ENCODE measurements at regions of chr15 and their contacts with region 1.

Region 1: GRCh38 chr15:88657326-88658069 is 18.7 kb downstream of the ISG20 start:
- DNase-seq: peak; percentile 81
- H3K4me3 ChIP-seq: no peak overlapping the region
- H3K27ac ChIP-seq: no peak overlapping the region
- H3K4me1 ChIP-seq: peaks cover 31% of the 10 kb centered on the region
- H3K27me3 ChIP-seq: no peaks in the 10 kb centered on the region

Region 2: GRCh38 chr15:88727439-88727838 is 69.9 kb after region 1 on chr15:
- in situ Hi-C with region 1: no loop called
- DNase-seq: no peak
- H3K4me3 ChIP-seq: no peak overlapping the region
- H3K27ac ChIP-seq: no peak overlapping the region
- H3K4me1 ChIP-seq: no peaks in the 10 kb centered on the region
- H3K27me3 ChIP-seq: peaks cover 9% of the 10 kb centered on the region

Region 3: DNA sequence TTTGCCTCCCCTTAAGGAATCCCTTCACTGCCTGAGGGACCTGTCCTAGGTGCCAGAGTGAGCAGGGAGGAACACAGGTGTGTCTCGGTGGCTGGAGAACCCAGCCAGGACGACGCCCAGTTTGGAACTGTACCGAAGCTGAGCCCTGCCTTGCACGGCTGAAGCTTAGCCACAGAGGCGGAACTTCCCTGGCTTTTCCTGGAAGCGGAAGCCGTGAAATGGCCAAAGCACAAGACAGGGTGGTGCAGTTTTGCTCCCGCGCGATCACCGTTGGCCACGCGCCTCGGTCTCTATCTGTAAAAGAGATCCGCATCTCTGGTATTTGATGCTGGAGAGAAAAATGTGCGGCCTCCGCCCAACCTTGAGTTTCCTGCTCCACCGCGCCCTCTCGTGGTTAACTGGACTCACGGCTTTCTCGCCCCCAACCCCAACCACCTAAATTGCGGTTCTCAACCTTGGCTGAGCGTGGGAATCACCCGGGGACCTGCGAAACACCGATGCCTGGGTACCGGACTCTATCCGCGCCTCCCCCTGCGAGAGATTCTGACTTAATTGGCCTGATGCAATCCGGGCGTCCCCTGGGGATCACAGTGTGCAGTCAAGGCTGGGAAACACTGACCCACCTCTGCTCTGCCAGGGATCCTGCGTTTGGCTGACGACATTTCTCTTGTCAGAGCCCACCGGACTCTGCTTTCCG is 360.0 kb after region 1 on chr15:
- in situ Hi-C with region 1: loop called (anchors 25 kb)
- DNase-seq: peak; percentile 91
- H3K4me3 ChIP-seq: peak overlapping the region; percentile 55
- H3K27ac ChIP-seq: peak overlapping the region; percentile 77
- H3K4me1 ChIP-seq: peaks cover 42% of the 10 kb centered on the region
- H3K27me3 ChIP-seq: no peaks in the 10 kb centered on the region

Region 4: DNA sequence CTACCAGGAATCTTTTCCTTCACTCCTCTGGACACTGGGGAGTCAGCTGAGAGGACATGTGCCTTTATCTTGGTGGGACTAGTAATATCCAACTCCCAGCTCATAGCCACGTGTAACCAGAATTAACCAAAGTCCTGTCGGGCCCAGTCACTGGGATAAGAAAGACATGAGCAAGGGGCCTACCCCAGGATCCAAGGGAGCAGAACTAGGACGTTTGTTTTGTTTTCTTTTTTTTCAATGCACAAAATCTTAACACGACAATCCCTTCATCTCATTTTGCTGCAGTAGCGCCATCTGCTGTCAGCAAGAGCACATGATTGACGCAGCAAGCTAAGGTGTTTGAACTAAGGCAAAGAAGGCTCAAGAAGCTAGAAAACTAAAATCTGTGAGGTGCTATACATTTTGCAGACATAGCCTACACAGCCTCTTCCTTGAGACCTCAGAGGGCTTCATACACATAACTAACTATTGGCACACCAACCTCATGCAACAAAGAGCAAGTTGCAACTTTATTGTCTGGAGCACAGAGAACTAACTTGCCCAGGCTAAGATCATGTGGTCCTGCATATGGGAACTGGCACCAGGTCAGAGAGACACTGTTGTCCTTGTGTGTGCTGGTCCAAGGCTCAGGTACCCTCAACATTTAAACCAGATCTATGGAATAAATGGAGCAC is 520.3 kb after region 1 on chr15:
- in situ Hi-C with region 1: loop called (anchors 25 kb)
- DNase-seq: peak; percentile 85
- H3K4me3 ChIP-seq: no peak overlapping the region
- H3K27ac ChIP-seq: no peak overlapping the region
- H3K4me1 ChIP-seq: no peaks in the 10 kb centered on the region; the same call in 1 of the 2 replicates
- H3K27me3 ChIP-seq: no peaks in the 10 kb centered on the region

Measured in GM23248 (cell line).